ENCODE measurements at regions of chr11 and their contacts with region 1.

Region 1: DNA sequence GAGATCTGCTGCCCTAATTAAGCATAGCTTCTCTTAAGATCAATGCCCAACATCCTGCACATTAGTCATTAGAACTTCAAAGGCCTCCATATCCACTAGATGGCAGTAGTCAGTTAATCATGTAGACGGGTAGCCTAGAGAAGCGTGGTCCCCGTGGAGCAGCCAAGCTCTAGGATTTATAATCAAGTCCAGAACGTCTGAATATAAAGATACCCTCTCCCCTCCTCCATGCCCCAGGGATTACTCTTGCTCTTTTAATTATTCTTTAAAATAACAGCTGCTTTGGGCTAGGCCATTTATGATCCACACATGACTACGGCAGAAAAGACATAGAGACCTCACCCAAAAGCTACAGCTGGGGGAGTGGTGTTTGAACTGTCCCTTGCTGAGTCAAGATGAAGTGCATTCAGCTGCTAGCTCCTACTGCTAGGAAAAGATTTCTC is 327.6 kb upstream of the PLET1 start:
- DNase-seq: peak; percentile 40
- H3K4me3 ChIP-seq: no peak overlapping the region
- H3K27ac ChIP-seq: no peak overlapping the region
- H3K4me1 ChIP-seq: no peaks in the 10 kb centered on the region
- H3K27me3 ChIP-seq: no peaks in the 10 kb centered on the region
- CTCF ChIP-seq: peak; percentile 56

Region 2: DNA sequence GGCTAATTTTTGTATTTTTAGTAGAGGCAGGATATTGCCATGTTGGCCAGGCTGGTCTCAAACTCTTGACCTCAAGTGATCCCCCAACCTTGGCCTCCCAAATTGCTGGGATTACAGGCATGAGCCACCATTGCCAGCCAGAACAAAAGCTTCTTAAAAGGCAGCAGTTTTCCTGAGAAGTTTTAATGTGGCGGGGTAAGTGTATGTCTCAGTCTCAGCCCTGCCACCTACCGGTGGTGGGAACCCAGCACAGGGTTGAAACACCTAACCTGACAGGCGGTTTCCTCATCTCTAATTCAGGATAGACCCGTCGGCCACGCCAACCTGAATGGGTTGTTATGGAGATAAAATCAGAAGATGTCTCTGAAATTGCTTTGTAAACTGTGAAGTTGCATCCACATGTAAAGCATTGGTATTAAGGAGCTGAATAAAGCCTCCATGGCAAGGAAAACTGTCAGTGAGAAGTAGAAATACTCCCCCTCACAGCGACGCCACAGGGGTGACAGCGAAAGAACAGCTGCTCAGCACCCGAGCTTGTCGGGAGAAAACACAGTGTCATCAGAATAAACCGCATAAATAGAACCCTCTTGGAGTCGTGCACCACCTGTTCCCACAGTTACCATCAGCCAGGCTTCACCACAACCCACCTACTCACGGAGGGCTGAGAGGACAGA is 207.0 kb after region 1 on chr11:
- intact Hi-C with region 1: loop called (anchors 5 kb)
- DNase-seq: peak; percentile 34
- H3K4me3 ChIP-seq: no peak overlapping the region
- H3K27ac ChIP-seq: no peak overlapping the region
- H3K4me1 ChIP-seq: no peaks in the 10 kb centered on the region
- H3K27me3 ChIP-seq: no peaks in the 10 kb centered on the region
- CTCF ChIP-seq: peak; percentile 39

Region 3: GRCh38 chr11:113113801-113114706 is 525.8 kb after region 1 on chr11:
- intact Hi-C with region 1: loop called (anchors 5 kb)
- DNase-seq: peak; percentile 25
- H3K4me3 ChIP-seq: no peak overlapping the region
- H3K27ac ChIP-seq: no peak overlapping the region
- H3K4me1 ChIP-seq: no peaks in the 10 kb centered on the region
- H3K27me3 ChIP-seq: no peaks in the 10 kb centered on the region
- CTCF ChIP-seq: peak; percentile 51

Region 4: GRCh38 chr11:113289431-113290187 is 701.3 kb after region 1 on chr11:
- intact Hi-C with region 1: loop called (anchors 2 kb)
- DNase-seq: peak; percentile 43
- H3K4me3 ChIP-seq: no peak overlapping the region
- H3K27ac ChIP-seq: no peak overlapping the region
- H3K4me1 ChIP-seq: no peaks in the 10 kb centered on the region
- H3K27me3 ChIP-seq: no peaks in the 10 kb centered on the region
- CTCF ChIP-seq: peak; percentile 83

Measured in colonic mucosa (tissue), 4 donors.